ENCODE measurements at regions of chr9 and their contacts with region 1.

Region 1: GRCh38 chr9:27394154-27394825 is 97.3 kb upstream of the EQTN start:
- DNase-seq: no peak
- ATAC-seq: peak; percentile 75
- H3K4me3 ChIP-seq: no peak overlapping the region
- H3K27ac ChIP-seq: peak overlapping the region in 1 of 2 donors; percentile 54
- H3K4me1 ChIP-seq: peaks cover 0 to 12% of the 10 kb centered on the region in 2 donors
- H3K27me3 ChIP-seq: no peaks in the 10 kb centered on the region

Region 2: DNA sequence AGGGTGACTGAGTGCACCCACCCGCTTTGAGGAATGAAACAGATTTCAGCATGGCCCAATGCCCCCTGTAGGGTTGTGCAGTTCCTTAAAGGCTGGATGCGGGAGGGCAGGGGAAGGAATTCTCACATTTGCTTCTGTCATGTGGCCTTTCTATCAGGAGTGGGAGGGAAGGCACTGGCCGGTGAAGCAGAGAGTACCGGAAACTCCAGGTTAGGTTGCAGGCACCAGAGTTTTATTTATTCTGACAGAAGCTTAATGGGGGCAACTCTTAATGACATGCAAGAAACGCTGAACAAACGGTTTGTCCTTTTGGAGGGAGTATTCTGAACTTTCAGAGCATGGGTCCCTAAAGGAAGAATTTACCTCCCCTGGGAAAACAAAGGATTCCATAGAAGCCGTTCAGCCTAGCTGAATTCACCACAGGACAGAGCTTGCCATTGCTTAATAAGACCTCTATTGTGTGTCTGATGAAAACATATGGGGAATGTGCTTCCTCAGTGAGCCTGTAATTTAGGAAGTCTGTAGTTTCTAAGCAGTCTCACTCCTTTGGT is 53.3 kb before region 1 on chr9:
- intact Hi-C with region 1: loop called in 1 of 2 experiments (anchors 5 kb)
- DNase-seq: no peak
- ATAC-seq: no peak
- H3K4me3 ChIP-seq: no peak overlapping the region
- H3K27ac ChIP-seq: peak overlapping the region; percentile 46 to 59
- H3K4me1 ChIP-seq: peaks cover 4 to 11% of the 10 kb centered on the region in 2 donors
- H3K27me3 ChIP-seq: no peaks in the 10 kb centered on the region

Region 3: DNA sequence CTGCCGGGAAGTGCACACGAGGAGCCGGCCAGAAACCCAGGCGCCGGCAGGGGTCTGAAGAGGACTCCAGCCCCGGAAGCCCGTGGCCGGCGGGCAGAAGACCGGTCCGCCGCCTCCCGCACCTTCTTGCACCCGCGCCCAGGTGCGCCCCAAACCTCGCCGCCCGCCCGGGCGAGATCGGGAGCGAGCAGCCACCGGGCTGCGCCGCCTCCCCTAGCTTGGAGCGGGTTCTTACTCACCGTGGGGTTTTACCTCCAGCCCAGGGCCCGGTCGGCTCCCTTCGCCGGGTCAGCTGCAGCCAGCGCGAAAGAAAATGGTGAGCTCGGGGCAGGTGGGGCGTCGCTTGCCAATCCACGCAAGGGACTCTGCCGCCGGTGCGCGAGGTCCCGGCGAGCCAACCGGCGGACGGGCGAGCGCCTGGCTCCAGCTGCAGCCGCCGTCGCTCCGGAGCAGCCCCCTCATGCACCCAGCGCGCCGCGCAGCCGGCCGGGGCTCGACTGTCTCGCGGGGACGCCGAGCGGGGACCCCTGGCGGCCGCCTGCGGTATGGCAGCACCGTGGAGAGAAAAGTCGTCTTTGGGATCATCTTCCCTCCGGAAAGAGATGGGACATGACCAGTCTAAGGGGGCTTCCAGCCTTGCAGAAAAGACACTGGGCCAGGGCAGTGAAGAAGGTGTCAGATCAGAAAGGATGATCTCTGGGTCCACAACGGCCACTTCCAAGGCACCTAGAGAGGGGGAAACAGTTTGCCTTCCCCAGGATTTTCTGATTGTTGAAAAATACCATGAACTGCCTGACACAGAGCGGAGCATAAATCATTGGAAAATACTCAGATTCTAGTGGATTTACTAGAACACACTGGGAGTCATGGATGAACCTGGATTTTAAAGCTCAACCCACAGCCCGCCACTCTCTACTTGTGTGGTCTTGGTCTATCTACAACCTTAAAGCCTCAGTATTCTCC is 135.3 kb after region 1 on chr9 and contains the start of gene MOB3B:
- intact Hi-C with region 1: loop called in 1 of 2 experiments (anchors 5 kb)
- DNase-seq: peak; percentile 87 to 95
- ATAC-seq: peak; percentile 94
- H3K4me3 ChIP-seq: peak within 1 kb of the TSS; percentile 46 to 87
- H3K27ac ChIP-seq: peak within 1 kb of the TSS; percentile 71 to 83
- H3K4me1 ChIP-seq: peaks cover 0 to 1% of the 10 kb centered on the region in 2 donors
- H3K27me3 ChIP-seq: no peaks in the 10 kb centered on the region
- total RNA-seq, gene MOB3B: 5.8 to 9.0 TPM

Region 4: GRCh38 chr9:27539479-27540441 is 145.5 kb after region 1 on chr9:
- intact Hi-C with region 1: loop called in 1 of 2 experiments (anchors 1 kb)
- DNase-seq: peak; percentile 60 to 71
- ATAC-seq: peak; percentile 91
- H3K4me3 ChIP-seq: no peak overlapping the region
- H3K27ac ChIP-seq: peak overlapping the region; percentile 51 to 90
- H3K4me1 ChIP-seq: peaks cover 4 to 18% of the 10 kb centered on the region in 2 donors
- H3K27me3 ChIP-seq: no peaks in the 10 kb centered on the region